CD4-positive, alpha-beta memory T cell (primary cell): ENCODE measurements at regions of chr2 and their contacts with region 1.

Region 1: DNA sequence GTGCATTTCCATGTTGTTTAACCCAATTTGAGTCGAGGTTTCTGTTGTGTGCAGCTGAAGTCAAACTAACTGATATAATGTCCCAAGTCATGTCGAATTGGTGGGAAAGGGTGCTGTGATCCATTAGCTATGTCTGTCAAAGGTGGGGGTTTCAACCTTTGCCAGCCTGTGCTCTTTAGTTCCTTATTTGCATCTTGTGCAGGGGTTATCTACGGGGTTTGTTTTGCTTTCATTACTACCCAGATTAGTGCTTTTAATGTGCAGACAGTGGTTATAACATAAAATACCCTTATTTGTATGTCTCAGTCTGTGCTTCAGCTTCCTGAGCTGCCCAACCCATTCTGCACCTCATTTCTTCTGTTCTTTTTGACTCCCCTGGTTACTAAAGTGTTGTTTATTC is 271.9 kb upstream of the CXCR4 start:
- DNase-seq: no peak
- H3K4me3 ChIP-seq: no peak overlapping the region
- H3K4me3 Mint-ChIP-seq: no peak overlapping the region
- H3K27ac ChIP-seq: no peak overlapping the region
- H3K27ac Mint-ChIP-seq: peak overlapping the region in 2 of 7 donors; percentile 4 to 36
- H3K4me1 ChIP-seq: peaks cover 5% of the 10 kb centered on the region
- H3K4me1 Mint-ChIP-seq: peaks cover 9 to 14% (median 12%) of the 10 kb centered on the region in 4 donors
- H3K27me3 ChIP-seq: no peaks in the 10 kb centered on the region
- H3K27me3 Mint-ChIP-seq: no peaks in the 10 kb centered on the region

Region 2: DNA sequence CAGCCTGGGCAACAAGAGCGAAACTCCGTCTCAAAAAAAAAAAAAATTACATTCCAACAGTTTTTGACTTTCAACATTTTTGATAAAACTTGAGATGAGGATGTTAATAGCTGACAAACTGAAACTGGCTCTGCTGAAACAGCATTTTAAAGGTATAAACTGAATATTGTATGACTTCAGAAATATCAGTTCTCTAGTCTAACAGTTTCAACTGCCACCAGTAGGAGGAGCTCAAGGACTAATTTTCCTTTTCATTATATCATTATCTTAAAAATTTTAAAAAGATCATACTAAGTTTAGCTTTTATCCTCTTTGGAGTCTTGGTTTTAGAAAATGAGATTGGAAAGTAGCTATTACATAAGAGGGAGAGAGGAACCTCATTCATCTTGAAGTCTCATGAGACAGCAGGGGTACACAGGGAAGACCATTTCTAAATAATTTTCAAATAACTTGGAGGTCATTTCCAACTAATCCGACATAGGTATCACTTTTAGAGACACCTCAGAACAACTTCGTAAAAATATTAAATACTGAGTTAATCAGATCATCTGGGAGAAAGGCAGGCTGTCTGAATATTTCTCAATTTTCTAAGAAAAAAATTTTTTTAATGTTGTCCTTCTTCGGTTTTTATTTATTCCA is 476.0 kb before region 1 on chr2:
- CTCF ChIA-PET with region 1: interaction called, 487 read pairs
- POLR2A ChIA-PET with region 1: interaction called, 44 read pairs
- intact Hi-C with region 1: no loop called
- DNase-seq: peak; percentile 48 to 61 (median 58)
- H3K4me3 ChIP-seq: no peak overlapping the region
- H3K4me3 Mint-ChIP-seq: no peak overlapping the region
- H3K27ac ChIP-seq: no peak overlapping the region
- H3K27ac Mint-ChIP-seq: peak overlapping the region; percentile 34 to 90 (median 81)
- H3K4me1 ChIP-seq: no peaks in the 10 kb centered on the region
- H3K4me1 Mint-ChIP-seq: peaks cover 0 to 8% (median 3%) of the 10 kb centered on the region in 4 donors
- H3K27me3 ChIP-seq: no peaks in the 10 kb centered on the region
- H3K27me3 Mint-ChIP-seq: no peaks in the 10 kb centered on the region

Region 3: GRCh38 chr2:136482966-136483365 is 93.2 kb after region 1 on chr2:
- CTCF ChIA-PET with region 1: no interaction called
- POLR2A ChIA-PET with region 1: no interaction called
- intact Hi-C with region 1: no loop called
- DNase-seq: no peak
- H3K4me3 ChIP-seq: no peak overlapping the region
- H3K4me3 Mint-ChIP-seq: no peak overlapping the region
- H3K27ac ChIP-seq: no peak overlapping the region
- H3K27ac Mint-ChIP-seq: no peak overlapping the region
- H3K4me1 ChIP-seq: no peaks in the 10 kb centered on the region
- H3K4me1 Mint-ChIP-seq: no peaks in the 10 kb centered on the region
- H3K27me3 ChIP-seq: no peaks in the 10 kb centered on the region
- H3K27me3 Mint-ChIP-seq: peaks cover 0 to 5% of the 10 kb centered on the region in 2 donors